A673 (cell line): ENCODE measurements at regions of chr1 and their contacts with region 1.

Region 1: GRCh38 chr1:103514920-103515503 is 10.5 kb upstream of the RNPC3 start:
- DNase-seq: peak; percentile 78
- H3K4me3 ChIP-seq: no peak overlapping the region
- H3K27ac ChIP-seq: no peak overlapping the region
- H3K4me1 ChIP-seq: no peaks in the 10 kb centered on the region
- H3K27me3 ChIP-seq: no peaks in the 10 kb centered on the region
- CTCF ChIP-seq: peak; percentile 78

Region 2: GRCh38 chr1:103106426-103107341 is 408.3 kb before region 1 on chr1:
- CTCF ChIA-PET with region 1: no interaction called
- POLR2A ChIA-PET with region 1: no interaction called
- intact Hi-C with region 1: loop called (anchors 2 kb)
- DNase-seq: peak; percentile 72
- H3K4me3 ChIP-seq: peak overlapping the region; percentile 55
- H3K27ac ChIP-seq: no peak overlapping the region
- H3K4me1 ChIP-seq: no peaks in the 10 kb centered on the region
- H3K27me3 ChIP-seq: no peaks in the 10 kb centered on the region
- CTCF ChIP-seq: peak; percentile 80

Region 3: DNA sequence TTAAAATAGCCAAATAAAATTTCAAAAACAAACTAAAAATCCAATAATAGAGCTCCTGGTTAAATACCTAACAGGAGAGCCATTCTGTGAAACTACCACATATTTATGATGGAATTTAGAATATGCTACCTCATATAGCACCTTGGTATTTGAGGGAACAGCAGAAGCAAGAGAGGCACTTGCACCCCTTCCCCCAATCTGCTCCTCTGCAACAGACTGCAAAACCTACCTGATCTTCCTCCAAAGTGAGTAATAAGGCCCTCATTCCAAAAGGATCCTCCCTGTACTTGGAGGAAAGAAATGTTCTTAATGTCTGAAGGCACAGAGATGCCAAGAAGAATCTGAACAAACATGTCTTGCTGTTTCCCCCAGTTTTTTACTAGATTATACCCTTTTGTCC is 17.6 kb before region 1 on chr1:
- CTCF ChIA-PET with region 1: no interaction called
- POLR2A ChIA-PET with region 1: no interaction called
- intact Hi-C with region 1: no loop called
- DNase-seq: no peak
- H3K4me3 ChIP-seq: no peak overlapping the region
- H3K27ac ChIP-seq: no peak overlapping the region
- H3K4me1 ChIP-seq: no peaks in the 10 kb centered on the region
- H3K27me3 ChIP-seq: no peaks in the 10 kb centered on the region
- CTCF ChIP-seq: no peak